Head of caudate nucleus (tissue), 42 donors: ENCODE measurements at regions of chr17 and their contacts with region 1.

Region 1: DNA sequence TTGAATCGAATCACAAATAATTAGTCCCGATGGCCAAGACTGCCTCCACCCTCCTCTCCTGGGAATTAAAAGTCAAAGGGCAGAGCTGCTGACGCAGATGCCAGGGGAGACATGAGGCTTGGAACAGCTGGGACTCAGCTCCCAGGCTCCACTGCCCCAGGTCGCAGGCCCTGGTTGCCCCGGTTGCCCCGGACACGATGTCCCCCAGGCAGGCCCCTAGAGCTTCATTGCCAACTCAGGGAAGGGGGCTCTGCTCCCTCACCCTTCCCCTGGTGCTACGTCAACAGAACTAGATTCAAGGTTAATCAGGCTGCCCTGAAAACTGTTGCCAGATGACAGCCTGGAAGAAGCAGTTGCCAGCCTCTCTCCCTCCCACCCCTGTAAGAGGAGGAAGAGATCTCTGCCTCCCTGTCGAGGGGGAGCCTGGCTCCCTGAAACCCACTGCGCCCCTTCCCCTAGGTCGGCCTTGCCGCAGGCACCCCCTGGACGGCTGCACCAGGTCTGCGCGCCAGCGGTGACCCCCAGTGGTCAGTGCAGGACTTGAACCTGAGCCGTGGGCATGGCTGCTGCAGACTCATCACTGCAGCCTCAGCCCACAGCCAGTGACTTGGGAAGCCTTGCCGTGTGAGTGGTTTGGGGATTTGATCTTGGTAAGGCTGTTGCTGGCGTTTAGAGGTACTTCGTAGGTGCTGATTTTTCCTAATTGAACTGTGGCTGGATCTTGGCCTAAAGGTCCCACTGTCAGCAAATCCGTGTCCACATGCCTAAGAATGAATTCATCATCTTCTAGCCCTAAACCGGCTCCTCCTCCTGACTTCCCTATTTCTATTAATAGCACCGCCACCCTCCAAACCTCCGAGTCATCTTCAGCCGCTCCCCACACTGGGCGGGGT is 84.1 kb upstream of the TOB1 start:
- DNase-seq: peak; percentile 73 to 93 (median 84)

Region 2: GRCh38 chr17:50783193-50783660 is 167.0 kb before region 1 on chr17:
- intact Hi-C with region 1: loop called (anchors 10 kb)
- DNase-seq: peak; percentile 63 to 97 (median 91)

Region 3: DNA sequence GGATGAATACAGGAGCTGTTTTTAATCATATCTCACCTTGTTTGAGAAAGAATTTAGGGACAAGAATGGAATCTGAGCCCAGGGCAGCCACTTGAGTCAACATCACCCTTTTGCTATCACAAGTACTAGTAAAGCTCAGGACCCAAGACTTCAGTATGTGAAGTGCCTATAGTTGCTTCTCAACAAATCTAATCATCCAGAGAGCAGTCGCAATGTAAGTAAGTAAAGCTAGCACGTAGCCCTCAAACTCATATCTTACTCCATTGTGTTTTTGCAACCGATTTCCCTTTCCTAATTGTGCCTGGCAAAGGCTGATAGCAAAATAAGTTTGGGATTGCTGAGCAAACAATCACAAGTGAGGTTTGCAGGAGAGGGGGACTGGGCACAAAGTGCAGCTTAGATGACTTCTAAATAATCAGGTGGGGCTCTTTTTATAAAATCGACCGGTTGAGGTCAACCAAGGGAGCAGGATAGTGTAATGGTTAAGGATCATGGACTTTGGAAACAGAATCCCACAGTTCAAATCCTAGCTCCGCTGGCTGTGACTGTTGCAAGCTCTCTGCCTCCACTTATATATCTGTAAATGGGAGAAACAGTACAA is 97.1 kb before region 1 on chr17:
- intact Hi-C with region 1: loop called (anchors 5 kb)
- DNase-seq: peak in 1 of 42 donors; percentile 22

Region 4: GRCh38 chr17:50865984-50866774 is 84.1 kb before region 1 on chr17 and contains the start of gene TOB1:
- intact Hi-C with region 1: loop called (anchors 2 kb)
- DNase-seq: peak; percentile 91 to 99 (median 98)

Region 5: GRCh38 chr17:51028176-51028863 is 78.1 kb after region 1 on chr17:
- intact Hi-C with region 1: no loop called
- DNase-seq: no peak